A549 (cell line): ENCODE measurements at regions of chr19 and their contacts with region 1.

Region 1: DNA sequence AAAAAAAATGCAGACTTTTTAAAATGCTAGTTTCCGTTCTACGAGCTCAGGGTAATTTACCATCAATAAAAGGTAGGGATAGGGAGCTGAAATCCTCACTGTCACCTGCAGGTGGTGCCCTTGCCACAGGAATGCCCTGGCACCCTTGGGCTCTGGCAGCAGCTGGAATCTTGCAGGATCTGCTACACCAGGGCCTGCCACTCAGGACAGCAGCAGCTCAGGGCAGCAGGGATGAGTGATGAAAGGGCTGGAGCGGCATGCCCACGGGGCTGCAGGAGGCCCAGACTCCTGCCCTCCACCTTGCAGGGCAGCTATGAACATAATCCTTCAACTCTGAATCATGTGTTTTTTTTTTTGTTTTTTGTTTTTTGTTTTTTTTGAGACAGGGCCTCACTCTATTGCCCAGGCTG is 54.0 kb downstream of the GNG7 start:
- DNase-seq: peak; percentile 68 to 82
- ATAC-seq: peak; percentile 90 to 93
- H3K4me3 ChIP-seq: no peak overlapping the region
- H3K27ac ChIP-seq: no peak overlapping the region
- H3K4me1 ChIP-seq: no peaks in the 10 kb centered on the region
- CTCF ChIP-seq: peak; percentile 73
- EP300 ChIP-seq: no peak
- POLR2A ChIP-seq: no peak
- RAD21 ChIP-seq: peak; percentile 91 to 96

Region 2: DNA sequence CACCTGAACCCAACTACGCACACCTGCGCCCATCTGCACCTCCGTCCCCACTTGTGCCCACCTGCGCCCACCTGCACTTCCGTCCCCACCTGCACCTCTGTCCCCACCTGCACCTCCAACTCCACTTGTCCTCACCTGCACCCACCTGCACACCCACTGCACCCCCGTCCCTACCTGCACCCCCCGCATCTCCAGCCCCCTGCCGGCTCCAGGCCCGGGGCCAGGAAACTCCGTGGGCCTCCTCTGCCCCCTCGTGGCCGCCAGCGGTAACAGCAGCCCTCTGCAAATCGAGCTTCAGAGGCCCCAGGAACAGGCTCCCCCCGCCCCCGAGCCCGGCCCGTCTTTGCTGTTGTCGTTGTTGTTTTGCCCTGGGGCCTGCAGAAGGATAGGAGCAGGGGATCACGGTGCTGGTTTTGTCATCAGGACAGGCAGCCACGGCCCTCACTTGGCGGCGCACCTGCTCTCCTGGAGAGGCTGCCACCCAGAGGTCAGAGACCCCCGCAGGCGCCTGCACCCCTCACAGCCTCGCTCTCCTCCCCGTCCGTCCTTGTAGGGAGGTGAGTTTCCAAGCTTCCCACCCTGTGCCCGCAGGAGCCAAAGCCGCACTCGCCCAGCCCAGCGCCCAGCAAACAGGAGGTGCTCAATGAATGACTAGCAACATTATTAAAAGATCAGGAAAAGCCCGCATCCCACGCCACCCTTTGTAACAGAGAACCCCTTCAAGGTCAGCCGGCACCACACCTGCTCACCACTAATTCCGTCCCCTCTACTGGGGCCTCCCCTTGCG is 11.4 kb before region 1 on chr19:
- CTCF ChIA-PET with region 1: interaction called, 15 read pairs
- POLR2A ChIA-PET with region 1: no interaction called
- DNase-seq: peak; percentile 52 to 67
- ATAC-seq: peak; percentile 56 to 82
- H3K4me3 ChIP-seq: no peak overlapping the region
- H3K27ac ChIP-seq: peak overlapping the region in 1 of 2 experiments; percentile 52; a peak in 1 of 6 replicates
- H3K4me1 ChIP-seq: peaks cover 10% of the 10 kb centered on the region; the same call in 1 of the 3 replicates
- CTCF ChIP-seq: peak; percentile 62
- EP300 ChIP-seq: no peak
- POLR2A ChIP-seq: no peak
- RAD21 ChIP-seq: peak; percentile 73 to 81

Region 3: DNA sequence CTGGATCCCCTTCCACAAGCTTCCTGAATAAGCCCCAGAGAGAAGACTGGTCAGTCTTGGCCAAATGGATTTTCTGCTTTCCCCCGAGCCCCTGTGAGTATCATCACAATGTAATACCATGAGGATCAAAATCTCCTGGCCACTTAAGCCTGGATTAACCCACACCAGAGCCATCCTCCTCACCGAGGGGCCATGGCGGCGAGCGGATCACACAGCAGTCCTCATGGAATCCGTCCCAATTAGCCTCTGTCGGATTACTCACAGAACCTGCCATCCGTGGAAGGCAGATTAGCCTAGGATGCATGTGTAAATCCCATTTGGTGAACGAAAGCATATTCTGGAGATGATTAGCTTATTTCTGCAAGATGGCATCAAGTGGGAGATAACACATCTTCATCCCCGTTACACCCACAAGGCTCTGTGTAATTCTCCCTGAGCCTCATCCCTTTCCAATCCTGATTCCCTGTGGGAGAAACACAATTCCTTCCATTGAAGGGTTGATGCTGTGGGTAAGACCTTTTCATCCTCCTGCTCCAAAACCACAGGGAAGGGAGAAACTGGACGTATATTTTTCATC is 11.4 kb after region 1 on chr19:
- CTCF ChIA-PET with region 1: interaction called, 25 read pairs
- POLR2A ChIA-PET with region 1: no interaction called
- DNase-seq: no peak
- ATAC-seq: no peak
- H3K4me3 ChIP-seq: no peak overlapping the region
- H3K27ac ChIP-seq: no peak overlapping the region
- H3K4me1 ChIP-seq: no peaks in the 10 kb centered on the region
- CTCF ChIP-seq: no peak
- EP300 ChIP-seq: no peak
- POLR2A ChIP-seq: no peak
- RAD21 ChIP-seq: no peak

Region 4: DNA sequence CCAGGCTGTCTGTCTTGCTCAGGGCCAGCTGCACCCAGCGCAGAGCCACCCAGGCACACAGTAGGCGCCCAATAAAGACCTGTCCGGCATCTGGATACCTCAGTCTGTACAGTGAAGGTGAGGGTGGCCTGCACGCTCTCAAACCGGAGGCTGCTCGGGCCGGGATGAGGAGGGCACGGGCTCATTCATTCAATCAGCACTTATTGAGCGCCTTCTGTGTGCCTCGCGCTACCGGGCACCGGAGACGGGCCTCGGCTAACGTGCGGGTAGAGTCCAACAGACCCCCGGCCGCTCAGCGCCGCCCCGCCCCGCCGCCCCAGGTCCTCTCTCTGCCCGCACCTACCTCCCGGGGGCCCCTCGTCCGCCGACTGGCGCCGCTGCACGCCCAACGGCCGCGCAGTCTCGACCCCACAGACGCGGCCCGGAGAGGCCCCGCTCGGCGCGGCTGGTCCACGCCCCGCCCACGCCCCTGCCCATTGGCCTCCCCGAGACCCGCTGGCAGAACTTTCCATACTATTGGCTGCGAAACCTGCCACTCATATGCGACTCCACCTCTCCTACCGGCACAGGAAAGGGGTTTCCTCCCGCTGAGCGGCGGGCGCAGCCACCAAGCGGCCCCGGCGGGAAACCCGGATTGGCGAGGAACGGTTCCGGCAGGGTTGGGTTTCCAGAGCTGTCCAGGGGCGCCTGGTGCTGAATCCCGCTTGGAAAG is 91.2 kb after region 1 on chr19 and contains the start of gene SLC39A3:
- CTCF ChIA-PET with region 1: interaction called, 11 read pairs
- POLR2A ChIA-PET with region 1: interaction called, 6 read pairs
- DNase-seq: peak; percentile 97 to 99
- ATAC-seq: peak; percentile 99 to 100
- H3K4me3 ChIP-seq: peak within 1 kb of the TSS; percentile 91
- H3K27ac ChIP-seq: peak within 1 kb of the TSS; percentile 74 to 96
- H3K4me1 ChIP-seq: 0 out of 3 replicates have a peak, but pooled peaks cover 3% of the 10 kb centered on the region
- CTCF ChIP-seq: no peak
- EP300 ChIP-seq: no peak
- POLR2A ChIP-seq: peak; percentile 48
- RAD21 ChIP-seq: no peak
- polyA plus RNA-seq, gene SLC39A3: 29.6 and 38.1 TPM in 2 replicates

Region 5: DNA sequence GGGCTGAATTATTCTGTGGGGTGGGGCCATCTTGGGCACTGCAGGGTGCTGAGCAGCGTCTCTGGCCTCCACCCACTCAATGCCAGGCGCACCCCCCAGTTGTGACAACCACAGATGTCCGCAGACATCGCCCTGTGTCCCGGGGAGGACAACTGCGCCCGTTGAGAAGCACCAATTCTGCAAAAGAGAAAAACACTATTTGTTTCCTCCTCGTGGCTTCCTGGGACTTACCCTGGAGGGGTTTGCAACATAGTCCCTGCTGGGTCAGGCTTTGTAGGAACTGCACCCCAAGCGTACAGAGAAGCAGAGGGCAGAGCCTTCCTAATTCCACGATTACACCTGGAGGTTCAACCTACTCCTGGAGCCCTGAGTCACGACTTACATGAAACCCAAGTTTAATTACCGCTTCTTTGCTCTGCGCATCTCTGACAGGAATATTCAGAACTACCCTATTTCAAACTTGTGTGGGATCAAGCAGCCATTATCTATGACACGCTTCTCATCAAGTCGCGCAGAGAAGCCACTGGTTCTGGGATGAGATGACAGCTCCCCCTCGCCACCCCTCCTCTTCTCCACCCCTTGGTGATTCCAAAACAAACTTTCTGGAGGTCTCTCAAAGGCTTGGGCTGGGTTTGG is 102.4 kb after region 1 on chr19:
- CTCF ChIA-PET with region 1: interaction called, 57 read pairs
- POLR2A ChIA-PET with region 1: no interaction called
- DNase-seq: no peak
- ATAC-seq: no peak
- H3K4me3 ChIP-seq: no peak overlapping the region
- H3K27ac ChIP-seq: no peak overlapping the region
- H3K4me1 ChIP-seq: no peaks in the 10 kb centered on the region
- CTCF ChIP-seq: no peak
- EP300 ChIP-seq: no peak
- POLR2A ChIP-seq: no peak
- RAD21 ChIP-seq: no peak